ENCODE measurements at regions of chr3 and their contacts with region 1.

Region 1: GRCh38 chr3:51391075-51391567 is at the start of gene RBM15B:
- DNase-seq: peak; percentile 97 to 98 (median 98)
- H3K4me3 ChIP-seq: peak within 1 kb of the TSS; percentile 77
- H3K27ac ChIP-seq: peak within 1 kb of the TSS; percentile 81 to 88
- H3K4me1 ChIP-seq: peaks cover 15% of the 10 kb centered on the region
- H3K27me3 ChIP-seq: no peaks in the 10 kb centered on the region
- CTCF ChIP-seq: peak in 2 of 3 donors; percentile 87 to 93
- EP300 ChIP-seq: no peak
- POLR2A ChIP-seq: peak; percentile 50
- total RNA-seq, gene RBM15B: 21.3 to 40.2 (median 30.0) TPM

Region 2: DNA sequence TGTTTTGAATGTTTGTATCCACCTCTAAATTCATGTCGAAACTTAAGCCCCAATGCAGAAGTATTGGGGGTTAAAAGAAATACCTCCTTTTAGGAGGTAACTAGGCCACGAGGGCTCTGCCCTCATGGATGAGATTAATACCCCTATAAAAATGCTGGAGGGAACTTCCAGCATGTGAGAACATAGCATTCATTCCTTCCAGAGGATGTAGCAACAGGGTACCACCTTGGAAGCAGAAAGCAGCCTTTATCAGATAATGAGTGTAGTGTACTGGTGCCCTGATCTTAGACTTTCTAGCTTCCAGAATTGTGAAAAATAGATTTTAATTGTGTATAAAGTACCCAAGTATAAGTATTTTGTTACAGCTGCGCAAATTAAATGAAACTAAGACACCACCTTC is 359.5 kb before region 1 on chr3:
- intact Hi-C with region 1: no loop called
- DNase-seq: no peak
- H3K4me3 ChIP-seq: no peak overlapping the region
- H3K27ac ChIP-seq: no peak overlapping the region
- H3K4me1 ChIP-seq: no peaks in the 10 kb centered on the region
- H3K27me3 ChIP-seq: no peaks in the 10 kb centered on the region
- CTCF ChIP-seq: no peak
- EP300 ChIP-seq: no peak
- POLR2A ChIP-seq: no peak

Region 3: DNA sequence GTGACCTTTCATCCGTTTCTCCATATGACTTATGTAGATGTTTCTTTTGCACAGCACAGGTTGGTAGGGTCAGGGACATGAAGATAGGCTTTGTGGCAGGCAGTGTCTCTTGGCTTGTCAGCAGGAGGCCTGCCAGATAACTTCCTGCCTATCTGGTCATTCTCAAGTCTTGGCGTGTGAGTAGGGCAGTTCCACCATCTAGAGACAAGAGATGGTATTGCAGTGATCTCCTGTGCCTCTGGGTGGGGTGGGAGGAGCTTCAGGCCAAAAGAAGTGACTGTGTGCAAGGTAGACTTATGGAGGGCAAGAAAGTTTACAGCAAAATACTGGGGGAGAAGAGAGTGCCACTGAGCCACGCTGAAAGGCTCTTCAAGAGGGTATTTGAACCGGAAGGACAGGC is 291.0 kb after region 1 on chr3:
- intact Hi-C with region 1: loop called in 3 of 4 experiments (anchors 5 to 10 kb)
- DNase-seq: peak; percentile 50 to 72 (median 64)
- H3K4me3 ChIP-seq: no peak overlapping the region
- H3K27ac ChIP-seq: no peak overlapping the region
- H3K4me1 ChIP-seq: no peaks in the 10 kb centered on the region
- H3K27me3 ChIP-seq: no peaks in the 10 kb centered on the region
- CTCF ChIP-seq: peak; percentile 24 to 86 (median 72)
- EP300 ChIP-seq: no peak
- POLR2A ChIP-seq: no peak

Region 4: GRCh38 chr3:51696954-51697353 is 305.8 kb after region 1 on chr3:
- intact Hi-C with region 1: loop called in 1 of 4 experiments (anchors 10 kb)
- DNase-seq: no peak
- H3K4me3 ChIP-seq: no peak overlapping the region
- H3K27ac ChIP-seq: no peak overlapping the region
- H3K4me1 ChIP-seq: no peaks in the 10 kb centered on the region
- H3K27me3 ChIP-seq: no peaks in the 10 kb centered on the region
- CTCF ChIP-seq: no peak
- EP300 ChIP-seq: no peak
- POLR2A ChIP-seq: no peak

Region 5: GRCh38 chr3:51879937-51880336 is 488.8 kb after region 1 on chr3:
- intact Hi-C with region 1: no loop called
- DNase-seq: no peak
- H3K4me3 ChIP-seq: no peak overlapping the region
- H3K27ac ChIP-seq: no peak overlapping the region
- H3K4me1 ChIP-seq: no peaks in the 10 kb centered on the region
- H3K27me3 ChIP-seq: no peaks in the 10 kb centered on the region
- CTCF ChIP-seq: no peak
- EP300 ChIP-seq: no peak
- POLR2A ChIP-seq: no peak